Transverse colon (tissue), 4 donors: ENCODE measurements at regions of chr13 and their contacts with region 1.

Region 1: GRCh38 chr13:26538363-26539317 is 18.8 kb upstream of the WASF3 start:
- DNase-seq: no peak
- H3K4me3 ChIP-seq: no peak overlapping the region
- H3K27ac ChIP-seq: no peak overlapping the region
- H3K4me1 ChIP-seq: peaks cover 0 to 23% (median 1%) of the 10 kb centered on the region in 4 donors
- H3K27me3 ChIP-seq: peaks cover 9% of the 10 kb centered on the region
- CTCF ChIP-seq: no peak
- EP300 ChIP-seq: no peak
- POLR2A ChIP-seq: no peak

Region 2: GRCh38 chr13:25768838-25769237 is 769.8 kb before region 1 on chr13:
- in situ Hi-C with region 1: no loop called
- intact Hi-C with region 1: loop called (anchors 10 kb)
- DNase-seq: no peak
- H3K4me3 ChIP-seq: no peak overlapping the region
- H3K27ac ChIP-seq: no peak overlapping the region
- H3K4me1 ChIP-seq: no peaks in the 10 kb centered on the region
- H3K27me3 ChIP-seq: no peaks in the 10 kb centered on the region
- CTCF ChIP-seq: no peak
- EP300 ChIP-seq: no peak
- POLR2A ChIP-seq: no peak